ENCODE measurements at regions of chr9 and their contacts with region 1.

Region 1: DNA sequence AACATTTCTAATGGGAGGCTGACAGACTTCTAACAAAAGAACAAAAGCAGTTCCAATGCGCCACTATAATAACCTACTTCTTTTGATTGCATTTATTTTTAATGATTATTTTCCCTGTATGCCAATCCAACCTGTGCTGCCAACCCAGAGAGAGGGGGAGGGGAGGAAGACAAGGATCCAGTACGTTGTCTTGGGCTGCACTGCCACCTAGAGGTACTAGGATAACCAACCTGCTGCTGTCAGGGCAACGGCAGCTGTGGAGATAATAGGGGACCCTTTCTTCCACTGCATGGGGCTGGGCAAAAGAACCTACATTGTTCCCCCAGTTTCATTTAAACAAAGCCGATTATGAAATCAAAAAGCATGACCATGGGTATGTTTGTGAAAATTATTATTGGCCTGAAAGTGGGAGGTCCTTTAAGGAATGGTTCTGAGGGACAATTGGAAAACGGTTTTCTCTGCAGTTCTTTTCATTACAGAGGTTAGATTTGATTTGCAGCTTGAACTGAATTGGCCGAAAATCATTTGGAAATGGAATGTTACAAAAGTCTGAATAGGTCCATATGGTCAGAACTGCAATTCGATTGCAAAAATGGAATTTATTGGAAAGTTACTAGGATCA is 101.3 kb downstream of the RASEF start:
- DNase-seq: peak; percentile 88 to 93 (median 90)
- ATAC-seq: peak; percentile 99
- H3K4me3 ChIP-seq: no peak overlapping the region
- H3K27ac ChIP-seq: no peak overlapping the region
- H3K4me1 ChIP-seq: no peaks in the 10 kb centered on the region
- H3K27me3 ChIP-seq: no peaks in the 10 kb centered on the region
- CTCF ChIP-seq: peak; percentile 50 to 93 (median 91)
- POLR2A ChIP-seq: no peak

Region 2: GRCh38 chr9:82532504-82533180 is 429.0 kb before region 1 on chr9:
- intact Hi-C with region 1: loop called (anchors 10 kb)
- DNase-seq: no peak
- ATAC-seq: peak; percentile 58
- H3K4me3 ChIP-seq: no peak overlapping the region
- H3K27ac ChIP-seq: no peak overlapping the region
- H3K4me1 ChIP-seq: no peaks in the 10 kb centered on the region
- H3K27me3 ChIP-seq: no peaks in the 10 kb centered on the region
- CTCF ChIP-seq: peak in 6 of 7 experiments; percentile 25 to 68 (median 56)
- POLR2A ChIP-seq: no peak

Measured in body of pancreas (tissue), 4 donors.